RWPE1 (cell line): ENCODE measurements at regions of chr13 and their contacts with region 1.

Region 1: GRCh38 chr13:79541426-79542049 is 60.6 kb downstream of the NDFIP2 start:
- DNase-seq: peak; percentile 36
- H3K27ac ChIP-seq: no peak overlapping the region
- CTCF ChIP-seq: peak; percentile 72

Region 2: GRCh38 chr13:79423801-79424642 is 117.5 kb before region 1 on chr13:
- CTCF ChIA-PET with region 1: interaction called, 40 read pairs
- POLR2A ChIA-PET with region 1: no interaction called
- DNase-seq: peak; percentile 25
- H3K27ac ChIP-seq: no peak overlapping the region
- CTCF ChIP-seq: peak; percentile 75